ENCODE measurements at regions of chr1 and their contacts with region 1.

Region 1: DNA sequence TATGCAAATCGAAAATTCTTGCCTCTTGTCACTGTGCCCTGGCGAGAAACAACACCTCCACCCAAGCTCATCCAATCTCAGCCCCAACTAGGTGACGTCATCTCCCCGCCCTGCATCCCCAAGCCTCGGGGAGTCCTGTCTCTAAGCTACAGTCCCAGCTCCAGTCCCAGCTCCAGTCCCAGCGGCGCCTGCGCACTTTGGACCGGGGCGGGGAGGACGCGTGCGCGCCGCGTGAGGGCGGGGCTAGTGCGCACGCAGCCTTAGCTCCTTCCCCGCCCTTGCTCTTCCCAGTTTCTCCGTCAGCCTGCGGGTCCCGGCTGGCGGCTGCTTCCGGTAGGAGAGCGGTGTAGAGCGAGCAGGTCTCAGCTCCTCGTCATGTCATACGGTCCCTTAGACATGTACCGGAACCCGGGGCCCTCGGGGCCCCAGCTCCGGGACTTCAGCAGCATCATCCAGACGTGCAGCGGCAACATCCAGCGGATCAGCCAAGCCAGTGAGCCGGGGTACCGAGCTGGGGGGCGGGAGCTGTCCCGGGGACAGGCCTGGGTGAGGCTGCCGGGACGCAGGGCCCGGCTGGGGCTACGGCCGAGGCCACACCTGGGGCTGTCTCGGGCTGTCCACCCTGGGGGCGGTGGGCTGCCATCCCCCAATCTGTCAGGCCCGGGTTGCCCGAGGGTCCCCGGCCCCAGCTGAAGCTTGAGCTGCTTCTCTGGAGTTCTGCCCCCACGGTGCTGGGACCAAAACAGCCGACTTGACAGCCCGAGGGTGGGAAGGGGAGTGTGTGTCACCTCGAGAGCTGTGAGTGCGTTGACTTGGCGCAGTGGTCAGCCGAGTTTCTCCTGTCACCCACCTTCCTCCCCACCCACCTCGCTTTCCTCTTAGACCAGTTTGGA is at the start of gene STX12:
- DNase-seq: peak; percentile 98 to 99 (median 98)
- H3K4me3 ChIP-seq: peak within 1 kb of the TSS; percentile 97
- H3K27ac ChIP-seq: peak within 1 kb of the TSS; percentile 55 to 74
- H3K4me1 ChIP-seq: peaks cover 3% of the 10 kb centered on the region
- H3K27me3 ChIP-seq: no peaks in the 10 kb centered on the region
- CTCF ChIP-seq: no peak
- EP300 ChIP-seq: no peak
- POLR2A ChIP-seq: peak; percentile 88
- total RNA-seq, gene STX12: 34.3 to 45.7 (median 41.2) TPM

Region 2: GRCh38 chr1:27725374-27726173 is 47.6 kb before region 1 on chr1 and contains the start of gene FAM76A:
- intact Hi-C with region 1: loop called in 1 of 4 experiments (anchors 1 kb)
- DNase-seq: peak; percentile 99 to 100 (median 100)
- H3K4me3 ChIP-seq: peak within 1 kb of the TSS; percentile 76
- H3K27ac ChIP-seq: peak within 1 kb of the TSS; percentile 75 to 82
- H3K4me1 ChIP-seq: peaks cover 1% of the 10 kb centered on the region
- H3K27me3 ChIP-seq: no peaks in the 10 kb centered on the region
- CTCF ChIP-seq: peak in 2 of 3 donors; percentile 15 to 48
- EP300 ChIP-seq: no peak
- POLR2A ChIP-seq: peak; percentile 73
- total RNA-seq, gene FAM76A: 9.2 to 20.3 (median 15.7) TPM

Region 3: DNA sequence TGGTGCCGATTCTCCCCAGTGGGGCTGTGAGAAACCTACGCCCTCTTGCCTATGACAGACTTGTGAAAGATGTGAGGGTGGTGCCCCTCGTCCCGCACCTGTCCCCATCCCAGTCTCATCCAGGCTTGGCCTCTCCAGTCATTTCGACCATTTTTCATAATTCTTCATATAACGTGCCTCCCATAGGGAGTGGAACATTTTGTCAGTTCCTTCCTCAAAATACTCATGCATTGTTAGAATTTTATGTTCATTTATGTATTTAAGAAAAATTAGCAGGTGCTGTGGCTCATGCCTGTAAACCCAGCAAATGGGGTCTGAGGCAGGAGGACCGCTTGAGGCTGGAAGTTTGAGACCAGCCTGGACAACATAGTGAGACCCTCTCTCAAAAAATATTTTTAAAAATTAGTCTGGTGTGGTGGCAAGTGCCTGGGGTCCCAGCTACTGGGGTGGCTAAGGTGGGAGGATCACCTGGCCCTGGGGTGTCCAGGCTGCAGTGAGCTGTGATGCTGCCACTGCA is 142.0 kb after region 1 on chr1:
- intact Hi-C with region 1: no loop called
- DNase-seq: no peak
- H3K4me3 ChIP-seq: peak overlapping the region; percentile 13
- H3K27ac ChIP-seq: peak overlapping the region in 1 of 2 donors; percentile 68
- H3K4me1 ChIP-seq: no peaks in the 10 kb centered on the region
- H3K27me3 ChIP-seq: no peaks in the 10 kb centered on the region
- CTCF ChIP-seq: no peak
- EP300 ChIP-seq: no peak
- POLR2A ChIP-seq: no peak

Measured in ovary (tissue), 10 donors.